ENCODE measurements at regions of chr11 and their contacts with region 1.

Region 1: GRCh38 chr11:130434521-130435223 is 6.3 kb upstream of the ADAMTS8 start:
- DNase-seq: peak in 1 of 2 experiments; percentile 77
- H3K4me3 ChIP-seq: peak overlapping the region; percentile 40 to 83 (median 66); a peak in 7 of 8 replicates
- H3K27ac ChIP-seq: no peak overlapping the region
- H3K4me1 ChIP-seq: no peaks in the 10 kb centered on the region
- H3K27me3 ChIP-seq: peaks cover 0 to 9% (median 6%) of the 10 kb centered on the region in 4 experiments; a peak in 6 of 7 replicates
- CTCF ChIP-seq: peak; percentile 90 to 92 (median 91)
- EP300 ChIP-seq: no peak
- POLR2A ChIP-seq: no peak
- RAD21 ChIP-seq: peak; percentile 88 to 90

Region 2: DNA sequence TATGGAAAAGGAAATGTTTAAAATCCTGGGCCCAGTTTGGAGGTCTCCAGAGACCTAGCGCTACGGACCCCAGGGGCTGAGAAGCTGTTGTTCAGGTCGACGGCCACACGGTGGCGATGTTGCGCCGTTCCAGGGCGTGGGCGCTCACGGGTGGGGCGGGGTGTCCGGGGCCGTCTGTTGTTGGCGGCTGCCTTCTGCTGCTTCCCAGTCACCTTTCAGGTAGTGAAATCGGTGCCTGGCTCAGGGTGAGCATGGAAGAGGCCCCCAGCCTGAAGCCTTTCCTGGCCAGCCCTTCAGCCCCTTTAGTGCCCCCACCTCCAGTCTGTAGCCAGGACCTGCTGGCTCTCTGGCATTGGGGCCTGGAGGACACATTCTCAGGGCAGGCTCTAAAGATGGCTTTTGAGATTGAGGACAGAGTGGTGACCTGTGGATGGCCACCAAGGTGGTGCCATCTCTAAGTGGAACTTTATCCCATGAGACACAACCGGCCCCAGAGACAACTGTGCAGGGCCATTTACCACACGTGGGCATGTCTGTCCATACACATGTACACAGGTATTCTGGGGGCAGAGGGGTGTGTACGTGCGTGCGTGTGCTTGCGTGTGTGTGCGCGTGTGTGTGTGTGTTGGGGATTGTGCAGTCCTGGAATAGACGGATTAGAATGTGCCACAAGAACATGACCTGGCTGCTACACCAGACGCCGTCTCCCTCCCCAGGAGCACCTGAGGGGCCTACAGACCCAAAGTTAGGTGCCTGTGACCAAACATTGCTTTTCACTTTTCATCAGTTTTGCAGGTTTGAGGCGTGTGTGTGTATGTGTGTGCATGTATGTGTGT is 221.3 kb before region 1 on chr11:
- CTCF ChIA-PET with region 1: interaction called, 22 read pairs
- POLR2A ChIA-PET with region 1: interaction called, 5 read pairs
- DNase-seq: peak; percentile 31 to 96
- H3K4me3 ChIP-seq: no peak overlapping the region
- H3K27ac ChIP-seq: no peak overlapping the region
- H3K4me1 ChIP-seq: peaks cover 0 to 16% (median 12%) of the 10 kb centered on the region in 4 experiments; a peak in 6 of 7 replicates
- H3K27me3 ChIP-seq: no peaks in the 10 kb centered on the region
- CTCF ChIP-seq: peak; percentile 90 to 96 (median 94)
- EP300 ChIP-seq: no peak
- POLR2A ChIP-seq: no peak
- RAD21 ChIP-seq: peak; percentile 99

Region 3: GRCh38 chr11:130413405-130414106 is 21.1 kb before region 1 on chr11:
- CTCF ChIA-PET with region 1: interaction called, 31 read pairs
- POLR2A ChIA-PET with region 1: no interaction called
- DNase-seq: no peak
- H3K4me3 ChIP-seq: no peak overlapping the region
- H3K27ac ChIP-seq: no peak overlapping the region
- H3K4me1 ChIP-seq: no peaks in the 10 kb centered on the region; a peak in 1 of 7 replicates
- H3K27me3 ChIP-seq: no peaks in the 10 kb centered on the region
- CTCF ChIP-seq: no peak
- EP300 ChIP-seq: no peak
- POLR2A ChIP-seq: no peak
- RAD21 ChIP-seq: no peak

Region 4: GRCh38 chr11:130448416-130449309 is 14.0 kb after region 1 on chr11 and contains the start of gene ADAMTS15:
- CTCF ChIA-PET with region 1: interaction called, 93 read pairs
- POLR2A ChIA-PET with region 1: no interaction called
- DNase-seq: peak; percentile 80 to 87
- H3K4me3 ChIP-seq: peak within 1 kb of the TSS; percentile 49 to 72 (median 54)
- H3K27ac ChIP-seq: no peak within 1 kb of the TSS
- H3K4me1 ChIP-seq: peaks cover 0 to 9% (median 6%) of the 10 kb centered on the region in 4 experiments; a peak in 6 of 7 replicates
- H3K27me3 ChIP-seq: peaks cover 9 to 63% (median 44%) of the 10 kb centered on the region in 4 experiments
- CTCF ChIP-seq: no peak; a peak in 1 of 4 replicates
- EP300 ChIP-seq: no peak
- POLR2A ChIP-seq: peak in 1 of 2 experiments; percentile 34; a peak in 1 of 3 replicates
- RAD21 ChIP-seq: no peak
- total RNA-seq, gene ADAMTS15: 4.7 and 4.9 TPM in 2 replicates

Region 5: GRCh38 chr11:130499828-130500227 is 65.2 kb after region 1 on chr11:
- CTCF ChIA-PET with region 1: no interaction called
- POLR2A ChIA-PET with region 1: no interaction called
- DNase-seq: no peak
- H3K4me3 ChIP-seq: no peak overlapping the region
- H3K27ac ChIP-seq: no peak overlapping the region
- H3K4me1 ChIP-seq: no peaks in the 10 kb centered on the region
- H3K27me3 ChIP-seq: no peaks in the 10 kb centered on the region
- CTCF ChIP-seq: no peak
- EP300 ChIP-seq: no peak
- POLR2A ChIP-seq: no peak
- RAD21 ChIP-seq: no peak

Region 6: GRCh38 chr11:130574740-130575139 is 140.1 kb after region 1 on chr11:
- CTCF ChIA-PET with region 1: no interaction called
- POLR2A ChIA-PET with region 1: no interaction called
- DNase-seq: no peak
- H3K4me3 ChIP-seq: no peak overlapping the region
- H3K27ac ChIP-seq: no peak overlapping the region
- H3K4me1 ChIP-seq: no peaks in the 10 kb centered on the region
- H3K27me3 ChIP-seq: no peaks in the 10 kb centered on the region
- CTCF ChIP-seq: no peak
- EP300 ChIP-seq: no peak
- POLR2A ChIP-seq: no peak
- RAD21 ChIP-seq: no peak

Region 7: GRCh38 chr11:130839981-130840666 is 405.5 kb after region 1 on chr11:
- CTCF ChIA-PET with region 1: interaction called, 50 read pairs
- POLR2A ChIA-PET with region 1: no interaction called
- DNase-seq: no peak
- H3K4me3 ChIP-seq: no peak overlapping the region
- H3K27ac ChIP-seq: no peak overlapping the region
- H3K4me1 ChIP-seq: peaks cover 0 to 3% (median 0%) of the 10 kb centered on the region in 4 experiments; a peak in 2 of 7 replicates
- H3K27me3 ChIP-seq: no peaks in the 10 kb centered on the region; a peak in 1 of 7 replicates
- CTCF ChIP-seq: no peak
- EP300 ChIP-seq: no peak
- POLR2A ChIP-seq: no peak
- RAD21 ChIP-seq: no peak

Region 8: DNA sequence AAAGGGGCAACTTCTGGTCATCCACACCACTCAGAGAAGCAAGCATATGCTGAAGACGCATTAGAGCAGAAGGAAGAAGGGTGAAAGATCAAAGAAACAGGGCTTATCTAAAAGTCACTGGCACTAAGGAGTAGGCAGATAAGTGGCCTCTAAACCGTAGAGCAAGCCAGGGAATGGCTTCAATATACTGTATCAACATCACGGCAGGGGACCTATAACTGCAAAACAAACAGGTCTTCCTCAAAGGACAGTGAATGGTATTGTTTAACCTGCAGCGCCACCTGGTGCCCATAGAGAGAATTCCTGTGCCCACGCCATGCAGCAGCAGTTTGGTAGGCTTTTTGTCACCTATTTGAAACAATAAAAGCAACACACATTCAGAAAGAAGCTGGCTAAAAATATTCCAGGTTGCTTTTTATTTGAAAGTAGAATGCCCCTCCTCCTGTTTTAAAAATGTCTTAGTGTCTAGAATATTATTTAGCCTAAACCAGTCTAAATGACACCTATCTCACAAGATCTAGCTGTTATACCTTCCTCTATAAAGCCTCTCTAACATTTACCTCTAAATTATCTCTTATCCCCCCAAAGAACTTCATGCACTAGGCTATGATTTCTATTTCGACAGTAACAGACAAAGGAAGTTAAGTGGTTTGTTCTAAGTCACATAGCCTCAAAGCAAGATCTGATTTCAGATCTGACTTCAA is 459.8 kb after region 1 on chr11:
- CTCF ChIA-PET with region 1: interaction called, 100 read pairs
- POLR2A ChIA-PET with region 1: interaction called, 3 read pairs
- DNase-seq: peak; percentile 57 to 87
- H3K4me3 ChIP-seq: no peak overlapping the region
- H3K27ac ChIP-seq: no peak overlapping the region
- H3K4me1 ChIP-seq: peaks cover 2 to 8% (median 6%) of the 10 kb centered on the region in 4 experiments; a peak in 5 of 7 replicates
- H3K27me3 ChIP-seq: no peaks in the 10 kb centered on the region
- CTCF ChIP-seq: peak; percentile 75 to 90 (median 78)
- EP300 ChIP-seq: no peak
- POLR2A ChIP-seq: no peak
- RAD21 ChIP-seq: peak; percentile 84 to 86